Psoas muscle (tissue), 8 donors: ENCODE measurements at regions of chr22 and their contacts with region 1.

Region 1: DNA sequence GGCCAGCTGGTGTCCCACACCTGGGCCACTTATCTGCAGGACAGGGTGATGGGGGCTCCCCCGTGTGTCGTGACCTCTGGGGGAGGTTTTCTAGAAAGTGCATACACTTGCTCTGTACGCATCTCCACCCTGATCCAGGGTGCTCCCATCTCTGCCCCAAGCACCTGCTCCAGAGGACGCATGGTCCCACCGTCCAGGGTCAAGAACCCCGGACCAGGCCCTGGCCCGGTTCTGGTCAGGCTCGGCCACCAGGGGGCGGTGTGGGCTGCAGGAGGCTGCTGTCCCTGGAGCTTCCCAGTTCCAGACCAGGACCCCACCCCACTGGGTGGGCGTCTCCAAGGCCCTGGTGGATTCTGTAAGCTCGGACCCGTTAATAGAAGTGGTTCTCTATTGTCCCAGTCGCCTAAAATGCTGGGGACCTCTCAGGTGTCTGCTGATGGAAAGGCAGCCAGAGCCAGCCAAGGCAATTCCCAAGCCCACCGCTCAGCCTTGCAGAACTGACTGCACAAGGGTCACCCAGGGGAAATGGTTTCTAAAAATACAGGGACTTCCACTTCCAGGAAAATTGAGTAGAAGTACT is 34.7 kb upstream of the SEPTIN5 start:
- DNase-seq: peak; percentile 65 to 80
- ATAC-seq: peak; percentile 73 to 92 (median 83)
- H3K4me3 ChIP-seq: no peak overlapping the region
- H3K27ac ChIP-seq: no peak overlapping the region
- H3K4me1 ChIP-seq: no peaks in the 10 kb centered on the region
- H3K27me3 ChIP-seq: peaks cover 0 to 22% (median 0%) of the 10 kb centered on the region in 3 donors
- CTCF ChIP-seq: peak; percentile 92

Region 2: GRCh38 chr22:19717691-19718455 is 38.3 kb after region 1 on chr22:
- intact Hi-C with region 1: loop called (anchors 1 to 2 kb)
- DNase-seq: peak; percentile 84 to 88
- ATAC-seq: peak; percentile 84 to 92 (median 88)
- H3K4me3 ChIP-seq: peak overlapping the region; percentile 67
- H3K27ac ChIP-seq: no peak overlapping the region
- H3K4me1 ChIP-seq: peaks cover 8% of the 10 kb centered on the region
- H3K27me3 ChIP-seq: peaks cover 0 to 21% (median 6%) of the 10 kb centered on the region in 3 donors
- CTCF ChIP-seq: peak; percentile 99

Region 3: GRCh38 chr22:19909350-19910179 is 230.0 kb after region 1 on chr22:
- intact Hi-C with region 1: loop called in 1 of 2 experiments (anchors 2 kb)
- DNase-seq: peak; percentile 84 to 92
- ATAC-seq: peak; percentile 89 to 96 (median 94)
- H3K4me3 ChIP-seq: no peak overlapping the region
- H3K27ac ChIP-seq: no peak overlapping the region
- H3K4me1 ChIP-seq: no peaks in the 10 kb centered on the region
- H3K27me3 ChIP-seq: no peaks in the 10 kb centered on the region
- CTCF ChIP-seq: peak; percentile 86